ENCODE measurements at regions of chr2 and their contacts with region 1.

Region 1: GRCh38 chr2:203782262-203782976 is 76.0 kb downstream of the CD28 start:
- DNase-seq: peak; percentile 21 to 58
- H3K4me3 ChIP-seq: no peak overlapping the region
- H3K27ac ChIP-seq: no peak overlapping the region
- H3K4me1 ChIP-seq: peaks cover 0 to 3% (median 0%) of the 10 kb centered on the region in 4 experiments; a peak in 2 of 7 replicates
- H3K27me3 ChIP-seq: no peaks in the 10 kb centered on the region
- CTCF ChIP-seq: peak; percentile 28 to 88 (median 68)
- EP300 ChIP-seq: no peak
- POLR2A ChIP-seq: no peak
- RAD21 ChIP-seq: peak; percentile 66 to 74

Region 2: DNA sequence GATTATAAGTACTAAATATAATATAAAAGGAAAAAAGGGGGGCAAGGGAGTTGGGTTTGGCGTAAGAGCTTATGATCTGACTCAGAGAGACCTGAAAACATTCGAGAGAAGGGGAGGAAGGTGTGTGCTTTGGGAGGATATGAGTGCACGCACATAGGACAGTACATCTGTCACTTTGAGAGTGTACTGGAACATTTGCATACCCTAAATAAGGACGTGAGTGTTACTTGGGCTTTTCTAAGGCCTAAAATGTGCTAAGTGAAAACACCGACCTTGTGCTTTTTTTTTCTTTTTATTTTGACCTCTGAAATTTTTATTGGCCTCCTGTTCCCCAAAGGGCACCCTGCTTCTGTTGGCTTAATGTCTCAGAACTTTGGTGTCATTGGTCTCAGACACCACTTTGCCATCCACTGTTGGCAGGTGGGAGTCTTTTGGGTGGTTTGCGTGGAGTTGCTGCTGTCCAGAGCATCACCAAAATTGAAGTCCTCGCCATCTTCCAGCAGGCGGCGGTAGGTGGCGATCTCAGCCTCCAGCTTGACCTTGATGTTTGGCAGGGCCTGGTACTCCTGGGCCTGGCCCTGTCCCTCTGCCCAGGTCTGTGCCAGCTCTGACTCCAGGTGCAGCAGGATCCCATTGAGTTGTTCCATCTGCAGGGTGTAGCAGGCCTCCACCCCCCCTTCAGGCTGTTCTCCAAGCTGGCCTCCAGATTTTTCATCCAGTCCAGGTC is 18.3 kb before region 1 on chr2:
- CTCF ChIA-PET with region 1: interaction called, 18 read pairs
- POLR2A ChIA-PET with region 1: no interaction called
- DNase-seq: peak in 1 of 2 experiments; percentile 53
- H3K4me3 ChIP-seq: no peak overlapping the region
- H3K27ac ChIP-seq: no peak overlapping the region
- H3K4me1 ChIP-seq: no peaks in the 10 kb centered on the region
- H3K27me3 ChIP-seq: no peaks in the 10 kb centered on the region
- CTCF ChIP-seq: peak; percentile 26 to 43 (median 33); a peak in 3 of 4 replicates
- EP300 ChIP-seq: no peak
- POLR2A ChIP-seq: no peak
- RAD21 ChIP-seq: peak; percentile 8 to 42; a peak in 2 of 4 replicates

Region 3: GRCh38 chr2:203808046-203808750 is 25.8 kb after region 1 on chr2:
- CTCF ChIA-PET with region 1: interaction called, 14 read pairs
- POLR2A ChIA-PET with region 1: no interaction called
- DNase-seq: no peak
- H3K4me3 ChIP-seq: no peak overlapping the region
- H3K27ac ChIP-seq: no peak overlapping the region
- H3K4me1 ChIP-seq: no peaks in the 10 kb centered on the region
- H3K27me3 ChIP-seq: no peaks in the 10 kb centered on the region
- CTCF ChIP-seq: no peak
- EP300 ChIP-seq: no peak
- POLR2A ChIP-seq: no peak
- RAD21 ChIP-seq: no peak

Region 4: GRCh38 chr2:203960811-203961210 is 178.4 kb after region 1 on chr2:
- CTCF ChIA-PET with region 1: no interaction called
- POLR2A ChIA-PET with region 1: no interaction called
- DNase-seq: no peak
- H3K4me3 ChIP-seq: no peak overlapping the region
- H3K27ac ChIP-seq: no peak overlapping the region
- H3K4me1 ChIP-seq: no peaks in the 10 kb centered on the region; a peak in 2 of 7 replicates
- H3K27me3 ChIP-seq: no peaks in the 10 kb centered on the region
- CTCF ChIP-seq: no peak
- EP300 ChIP-seq: no peak
- POLR2A ChIP-seq: no peak
- RAD21 ChIP-seq: no peak